ENCODE measurements at regions of chr1 and their contacts with region 1.

Region 1: GRCh38 chr1:66542811-66543767 is 9.1 kb downstream of the SGIP1 start:
- DNase-seq: peak; percentile 57 to 93
- H3K4me3 ChIP-seq: no peak overlapping the region
- H3K27ac ChIP-seq: peak overlapping the region; percentile 83 to 84
- H3K4me1 ChIP-seq: peaks cover 5 to 55% of the 10 kb centered on the region in 2 donors
- H3K27me3 ChIP-seq: no peaks in the 10 kb centered on the region
- CTCF ChIP-seq: no peak

Region 2: DNA sequence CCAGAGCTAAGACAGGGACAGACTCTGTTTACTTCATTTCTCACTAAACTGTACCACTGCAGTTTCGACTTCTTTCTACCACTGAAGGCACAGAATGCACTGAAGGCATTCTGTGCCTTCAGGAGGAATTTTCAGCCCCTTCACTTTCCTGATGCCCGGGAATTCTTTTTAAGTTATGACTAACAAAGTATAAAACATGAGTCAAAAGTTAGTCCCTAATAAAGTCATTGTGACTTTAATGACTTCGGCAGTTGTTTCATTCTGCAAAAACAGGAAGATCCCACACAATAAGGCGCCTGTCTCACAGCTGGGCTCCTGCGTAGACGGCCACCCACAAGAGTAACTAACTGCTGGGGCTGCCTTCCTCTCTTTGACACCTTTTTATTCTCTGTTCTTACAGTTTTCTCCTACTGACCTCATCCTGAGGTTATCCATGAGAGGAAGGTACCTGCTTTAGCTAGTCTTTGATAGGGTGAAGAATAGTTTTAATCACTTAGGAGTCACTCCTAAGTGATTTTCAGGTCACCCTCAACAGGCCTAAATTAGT is 193.0 kb before region 1 on chr1:
- intact Hi-C with region 1: no loop called
- DNase-seq: no peak
- H3K4me3 ChIP-seq: no peak overlapping the region
- H3K27ac ChIP-seq: no peak overlapping the region
- H3K4me1 ChIP-seq: no peaks in the 10 kb centered on the region
- H3K27me3 ChIP-seq: no peaks in the 10 kb centered on the region
- CTCF ChIP-seq: no peak

Region 3: GRCh38 chr1:66575739-66576138 is 32.6 kb after region 1 on chr1:
- intact Hi-C with region 1: loop called (anchors 5 kb)
- DNase-seq: no peak
- H3K4me3 ChIP-seq: no peak overlapping the region
- H3K27ac ChIP-seq: peak overlapping the region in 1 of 2 donors; percentile 15
- H3K4me1 ChIP-seq: peaks cover 0 to 5% of the 10 kb centered on the region in 2 donors
- H3K27me3 ChIP-seq: no peaks in the 10 kb centered on the region
- CTCF ChIP-seq: no peak

Region 4: GRCh38 chr1:66924756-66925557 is 381.9 kb after region 1 on chr1 and contains the starts of genes DNAI4 and MIER1:
- intact Hi-C with region 1: loop called (anchors 2 kb)
- DNase-seq: peak; percentile 95 to 99
- H3K4me3 ChIP-seq: peak within 1 kb of the TSS; percentile 71 to 74
- H3K27ac ChIP-seq: peak within 1 kb of the TSS; percentile 85 to 95
- H3K4me1 ChIP-seq: peaks cover 10% of the 10 kb centered on the region in 2 donors
- H3K27me3 ChIP-seq: no peaks in the 10 kb centered on the region
- CTCF ChIP-seq: peak in 1 of 3 experiments; percentile 17
- total RNA-seq, gene DNAI4: not detected
- total RNA-seq, gene MIER1: 18.4 TPM

Measured in ascending aorta (tissue), 2 donors.